ENCODE measurements at regions of chr17 and their contacts with region 1.

Region 1: DNA sequence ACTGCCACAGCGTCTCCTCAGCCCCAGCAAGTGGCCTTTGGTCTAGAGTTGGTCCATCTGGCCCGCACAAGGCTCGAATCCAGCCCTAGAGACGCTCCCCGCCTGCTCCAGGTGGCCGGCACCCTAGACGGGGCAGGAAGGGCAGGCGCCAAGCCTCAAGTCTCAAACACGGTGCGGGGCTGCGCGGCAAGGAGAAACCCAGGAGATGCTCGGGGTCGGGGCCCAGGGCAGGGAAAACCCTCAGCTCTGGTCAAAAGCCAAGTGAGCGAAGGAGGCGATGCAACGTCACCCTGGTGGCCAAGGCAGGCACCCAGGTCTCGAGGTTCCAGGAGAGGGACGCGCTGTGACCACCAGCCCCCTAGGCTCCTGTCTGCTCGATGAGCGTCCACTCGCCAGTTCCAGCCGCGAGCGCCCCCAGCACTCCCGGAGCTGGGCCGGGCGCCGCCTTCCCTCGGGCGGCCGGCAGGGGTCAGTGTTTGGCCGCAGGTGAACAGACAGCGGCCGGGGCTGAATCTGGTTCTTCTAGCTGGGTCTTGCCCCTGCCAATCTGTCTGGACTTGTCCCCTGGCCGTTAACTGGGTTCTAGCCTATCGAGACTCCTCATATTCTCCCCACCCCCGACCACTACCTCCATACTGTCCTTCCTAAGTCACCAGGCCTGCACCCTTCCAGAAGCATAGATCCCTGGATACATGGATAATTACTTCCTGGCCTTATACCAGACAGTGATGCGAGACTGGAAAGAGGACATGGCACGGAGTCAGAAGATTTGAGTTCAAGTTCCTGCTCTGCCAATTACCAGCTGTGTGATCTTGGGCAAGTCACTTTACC is 44.0 kb downstream of the PRAC1 start:
- DNase-seq: peak; percentile 71 to 80
- H3K4me3 ChIP-seq: peak overlapping the region in 1 of 4 donors; percentile 22
- H3K27ac ChIP-seq: no peak overlapping the region
- H3K4me1 ChIP-seq: peaks cover 5 to 8% (median 7%) of the 10 kb centered on the region in 4 donors
- H3K27me3 ChIP-seq: peaks cover 5 to 89% (median 24%) of the 10 kb centered on the region in 3 donors
- CTCF ChIP-seq: peak in 5 of 7 experiments; percentile 66 to 93 (median 92)
- EP300 ChIP-seq: no peak
- POLR2A ChIP-seq: no peak

Region 2: GRCh38 chr17:47957591-47958428 is 720.5 kb before region 1 on chr17 and contains the start of gene PRR15L:
- intact Hi-C with region 1: no loop called
- DNase-seq: peak; percentile 93 to 94
- H3K4me3 ChIP-seq: peak within 1 kb of the TSS; percentile 44 to 57 (median 48)
- H3K27ac ChIP-seq: peak within 1 kb of the TSS; percentile 89 to 95 (median 94)
- H3K4me1 ChIP-seq: peaks cover 21 to 36% (median 28%) of the 10 kb centered on the region in 4 donors
- H3K27me3 ChIP-seq: no peaks in the 10 kb centered on the region
- CTCF ChIP-seq: no peak
- EP300 ChIP-seq: no peak
- POLR2A ChIP-seq: peak in 2 of 4 donors; percentile 76 to 89
- total RNA-seq, gene PRR15L: 23.9 to 93.6 (median 69.8) TPM

Region 3: GRCh38 chr17:48510761-48511604 is 167.4 kb before region 1 on chr17:
- intact Hi-C with region 1: no loop called
- DNase-seq: no peak
- H3K4me3 ChIP-seq: no peak overlapping the region
- H3K27ac ChIP-seq: no peak overlapping the region
- H3K4me1 ChIP-seq: peaks cover 0 to 17% (median 5%) of the 10 kb centered on the region in 4 donors
- H3K27me3 ChIP-seq: peaks cover 0 to 81% (median 19%) of the 10 kb centered on the region in 3 donors
- CTCF ChIP-seq: no peak
- EP300 ChIP-seq: no peak
- POLR2A ChIP-seq: no peak

Region 4: GRCh38 chr17:48791128-48792032 is 113.0 kb after region 1 on chr17:
- intact Hi-C with region 1: loop called (anchors 5 kb)
- DNase-seq: peak; percentile 89 to 91
- H3K4me3 ChIP-seq: no peak overlapping the region
- H3K27ac ChIP-seq: no peak overlapping the region
- H3K4me1 ChIP-seq: peaks cover 9 to 28% (median 20%) of the 10 kb centered on the region in 4 donors
- H3K27me3 ChIP-seq: peaks cover 0 to 59% (median 0%) of the 10 kb centered on the region in 3 donors
- CTCF ChIP-seq: peak in 5 of 7 experiments; percentile 65 to 85 (median 75)
- EP300 ChIP-seq: no peak
- POLR2A ChIP-seq: no peak

Region 5: GRCh38 chr17:49031965-49032928 is 353.9 kb after region 1 on chr17:
- intact Hi-C with region 1: loop called (anchors 10 kb)
- DNase-seq: peak; percentile 49 to 92
- H3K4me3 ChIP-seq: no peak overlapping the region
- H3K27ac ChIP-seq: no peak overlapping the region
- H3K4me1 ChIP-seq: peaks cover 0 to 4% (median 0%) of the 10 kb centered on the region in 4 donors
- H3K27me3 ChIP-seq: peaks cover 0 to 37% (median 0%) of the 10 kb centered on the region in 3 donors
- CTCF ChIP-seq: peak in 5 of 7 experiments; percentile 55 to 75 (median 61)
- EP300 ChIP-seq: no peak
- POLR2A ChIP-seq: no peak

Measured in stomach (tissue), 19 donors.